ENCODE measurements at regions of chr6 and their contacts with region 1.

Region 1: GRCh38 chr6:109382576-109383437 is 540 bp upstream of the CD164 start:
- DNase-seq: peak; percentile 96
- H3K4me3 ChIP-seq: peak overlapping the region; percentile 98 to 99
- H3K27ac ChIP-seq: peak overlapping the region; percentile 99 to 100
- H3K4me1 ChIP-seq: peaks cover 30% of the 10 kb centered on the region
- H3K27me3 ChIP-seq: no peaks in the 10 kb centered on the region
- CTCF ChIP-seq: peak; percentile 46 to 58 (median 49)
- POLR2A ChIP-seq: no peak

Region 2: DNA sequence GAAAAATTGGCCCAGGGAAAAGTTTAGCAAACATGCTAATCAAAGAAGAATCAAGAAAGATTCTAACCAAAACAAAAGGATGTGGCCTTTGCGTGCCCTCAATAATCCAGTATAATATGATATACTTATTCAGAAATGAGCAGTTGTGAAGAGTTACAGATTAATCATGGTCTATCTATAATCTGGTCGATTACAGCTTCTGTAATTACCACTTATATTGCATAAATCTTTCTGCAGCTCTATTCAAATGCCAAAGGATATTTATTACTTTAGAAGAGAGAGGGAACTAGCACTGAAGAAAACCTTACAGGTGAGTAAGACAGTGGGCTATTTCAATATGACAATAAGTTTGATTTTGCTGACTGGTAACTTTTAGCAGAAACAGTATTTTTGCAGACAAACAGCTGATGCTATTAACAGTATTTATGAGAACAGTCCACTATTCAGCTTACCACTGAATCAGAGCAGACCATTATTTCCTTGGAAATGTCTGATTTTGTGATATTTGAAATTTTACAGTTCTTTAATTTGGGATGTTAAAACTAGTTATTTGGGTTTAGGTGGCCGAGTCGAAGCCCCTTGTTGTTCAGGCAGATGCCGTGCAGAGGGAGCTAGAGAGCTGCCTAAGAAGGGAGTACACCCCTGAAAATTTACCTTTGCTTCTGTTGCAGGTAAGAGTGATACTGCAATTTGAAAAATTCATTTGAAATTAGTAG is 195.2 kb before region 1 on chr6:
- intact Hi-C with region 1: loop called (anchors 10 kb)
- DNase-seq: peak; percentile 63
- H3K4me3 ChIP-seq: no peak overlapping the region
- H3K27ac ChIP-seq: no peak overlapping the region
- H3K4me1 ChIP-seq: no peaks in the 10 kb centered on the region
- H3K27me3 ChIP-seq: no peaks in the 10 kb centered on the region
- CTCF ChIP-seq: peak; percentile 73 to 80 (median 74)
- POLR2A ChIP-seq: no peak

Measured in testis (tissue), 5 donors.